A549 (cell line): ENCODE measurements at regions of chr1 and their contacts with region 1.

Region 1: DNA sequence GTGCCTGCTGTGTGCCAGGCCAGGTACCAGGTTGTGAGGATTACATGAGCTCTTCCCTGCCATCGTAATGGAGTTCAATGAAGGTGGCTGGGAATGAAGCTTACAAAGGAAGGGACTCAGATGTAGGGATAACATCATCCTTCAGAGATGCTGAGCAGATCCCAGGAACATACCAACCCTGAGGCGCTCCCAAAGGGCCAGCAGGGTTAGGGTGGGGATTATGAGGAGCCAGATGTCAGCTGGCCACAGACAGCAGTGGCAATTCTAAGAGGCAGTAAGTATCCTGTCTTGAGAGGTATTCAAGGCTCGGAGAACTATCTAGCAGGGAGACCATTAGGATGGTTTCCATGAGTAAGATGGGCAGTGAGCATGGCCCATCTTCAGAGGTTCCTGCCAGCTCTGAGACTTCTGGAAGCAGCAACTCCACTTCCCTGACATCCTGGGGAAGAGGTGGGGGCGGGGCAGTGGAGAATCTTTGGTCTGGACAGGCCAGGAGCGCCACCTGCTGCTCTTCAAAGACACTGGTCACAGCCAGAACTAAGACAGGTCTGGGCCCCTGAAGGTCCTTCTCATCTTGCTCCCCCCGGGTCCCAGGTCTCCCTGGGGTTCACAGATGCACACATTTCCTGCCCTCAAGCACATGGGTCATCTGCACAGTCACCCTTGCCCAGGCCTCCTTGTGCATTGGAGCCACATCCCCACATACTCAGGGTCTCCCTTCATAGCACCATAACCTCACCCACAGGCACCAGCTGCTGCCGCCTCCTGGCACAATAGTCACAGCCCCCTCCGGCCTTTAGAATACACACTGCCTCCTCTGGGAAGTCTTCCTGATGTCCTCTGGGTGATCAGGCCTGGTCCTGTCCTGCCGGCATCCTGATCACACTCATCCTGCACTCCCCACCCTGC is 2.7 kb upstream of the SDC3 start:
- DNase-seq: peak; percentile 74 to 81
- ATAC-seq: peak; percentile 75 to 87
- H3K4me3 ChIP-seq: no peak overlapping the region
- H3K27ac ChIP-seq: no peak overlapping the region
- H3K4me1 ChIP-seq: peaks cover 13% of the 10 kb centered on the region
- CTCF ChIP-seq: peak; percentile 76
- EP300 ChIP-seq: no peak
- POLR2A ChIP-seq: no peak
- RAD21 ChIP-seq: peak; percentile 94 to 97

Region 2: GRCh38 chr1:30718636-30719405 is 192.5 kb before region 1 on chr1:
- CTCF ChIA-PET with region 1: interaction called, 73 read pairs
- POLR2A ChIA-PET with region 1: interaction called, 4 read pairs
- DNase-seq: peak; percentile 66 to 94
- ATAC-seq: peak; percentile 80 to 81
- H3K4me3 ChIP-seq: peak overlapping the region; percentile 62
- H3K27ac ChIP-seq: peak overlapping the region; percentile 92 to 97
- H3K4me1 ChIP-seq: peaks cover 5% of the 10 kb centered on the region; the same call in 2 of the 3 replicates
- CTCF ChIP-seq: peak; percentile 83
- EP300 ChIP-seq: no peak
- POLR2A ChIP-seq: peak; percentile 82
- RAD21 ChIP-seq: peak in 1 of 2 experiments; percentile 89; a peak in 3 of 5 replicates

Region 3: GRCh38 chr1:30779294-30780071 is 131.8 kb before region 1 on chr1:
- CTCF ChIA-PET with region 1: interaction called, 743 read pairs
- POLR2A ChIA-PET with region 1: no interaction called
- DNase-seq: peak; percentile 61 to 67
- ATAC-seq: peak; percentile 75 to 87
- H3K4me3 ChIP-seq: no peak overlapping the region
- H3K27ac ChIP-seq: no peak overlapping the region
- H3K4me1 ChIP-seq: no peaks in the 10 kb centered on the region
- CTCF ChIP-seq: peak; percentile 63
- EP300 ChIP-seq: no peak
- POLR2A ChIP-seq: no peak
- RAD21 ChIP-seq: peak; percentile 67 to 72

Region 4: GRCh38 chr1:30823969-30824735 is 87.1 kb before region 1 on chr1:
- CTCF ChIA-PET with region 1: interaction called, 14 read pairs
- POLR2A ChIA-PET with region 1: no interaction called
- DNase-seq: peak; percentile 93 to 98
- ATAC-seq: peak; percentile 95 to 98
- H3K4me3 ChIP-seq: peak overlapping the region; percentile 40
- H3K27ac ChIP-seq: peak overlapping the region; percentile 78 to 87
- H3K4me1 ChIP-seq: peaks cover 17% of the 10 kb centered on the region
- CTCF ChIP-seq: no peak
- EP300 ChIP-seq: no peak
- POLR2A ChIP-seq: peak; percentile 57
- RAD21 ChIP-seq: 0 out of 5 replicates have a peak, but pooled peaks of 1 of the 2 experiments have one; percentile 17

Region 5: DNA sequence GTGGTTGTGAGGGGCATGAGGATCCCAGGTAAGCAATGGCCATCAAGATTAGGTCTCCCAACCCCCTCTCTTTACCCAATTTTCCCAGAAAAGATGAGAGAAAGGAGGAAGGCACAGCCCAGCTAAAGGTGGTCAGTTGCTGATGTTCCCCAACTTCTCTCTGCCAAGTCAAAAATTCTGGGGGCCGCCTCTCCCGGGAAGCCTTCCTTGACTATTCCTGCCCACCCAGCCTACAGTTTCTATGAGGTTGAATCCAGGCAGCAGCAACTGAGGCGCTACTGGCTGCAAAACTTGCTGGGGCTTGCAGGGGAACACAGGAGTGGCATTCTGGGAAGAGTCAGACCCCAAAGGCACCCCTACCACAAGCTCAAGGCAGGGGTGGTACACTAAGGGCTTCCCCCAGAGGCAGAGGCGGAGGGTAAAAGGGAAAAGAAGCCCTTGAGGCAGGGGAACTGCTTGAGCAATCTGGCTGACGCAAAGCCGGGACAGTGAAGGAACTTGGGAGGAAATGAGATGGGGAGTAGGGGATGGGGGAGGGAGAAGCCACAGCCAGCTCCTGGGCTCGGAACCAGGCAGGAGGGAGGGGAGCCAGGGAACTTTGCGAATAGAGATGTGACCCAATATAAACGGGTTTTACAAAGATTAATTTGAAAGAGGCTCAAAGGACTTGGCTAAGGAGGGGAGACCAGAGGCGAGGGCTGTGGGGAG is 33.9 kb before region 1 on chr1:
- CTCF ChIA-PET with region 1: interaction called, 11 read pairs
- POLR2A ChIA-PET with region 1: no interaction called
- DNase-seq: no peak
- ATAC-seq: no peak
- H3K4me3 ChIP-seq: no peak overlapping the region
- H3K27ac ChIP-seq: no peak overlapping the region
- H3K4me1 ChIP-seq: no peaks in the 10 kb centered on the region
- CTCF ChIP-seq: no peak
- EP300 ChIP-seq: no peak
- POLR2A ChIP-seq: no peak
- RAD21 ChIP-seq: no peak

Region 6: DNA sequence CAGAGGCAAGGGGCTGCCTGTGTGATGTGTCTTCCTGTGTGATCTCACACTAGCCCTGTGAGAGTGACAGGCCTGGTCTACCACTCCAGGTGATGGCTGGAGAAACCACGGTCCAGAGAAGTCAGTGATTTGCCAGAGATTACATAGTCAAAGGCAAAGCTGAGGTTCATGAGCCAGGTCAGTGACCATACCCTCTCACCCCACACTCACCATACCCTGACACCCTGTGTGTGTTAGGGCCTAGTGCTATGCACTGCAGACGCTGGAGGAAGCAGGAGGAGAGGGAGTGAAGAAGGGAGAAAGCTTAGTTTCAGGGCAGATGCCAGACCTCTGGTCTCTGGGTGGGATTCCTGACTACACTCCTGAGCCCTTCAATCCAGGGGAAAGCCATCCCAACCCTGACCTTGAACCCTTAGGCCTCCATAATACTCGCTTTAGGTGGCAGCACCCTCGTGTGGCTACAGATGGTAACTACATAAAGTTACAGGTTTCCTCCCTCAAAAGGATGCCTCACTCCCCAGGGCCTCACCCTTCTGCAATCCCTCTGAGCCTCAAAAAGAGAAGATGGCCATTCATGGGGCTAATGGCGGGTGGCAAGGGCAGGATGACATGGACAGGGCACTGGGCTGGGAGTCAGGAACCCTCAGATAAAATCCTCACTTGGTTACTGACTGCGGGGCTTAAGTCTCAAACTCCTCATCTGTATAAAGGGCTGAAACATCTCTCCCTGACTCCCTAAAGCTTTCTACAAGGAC is 18.0 kb after region 1 on chr1:
- CTCF ChIA-PET with region 1: interaction called, 45 read pairs
- POLR2A ChIA-PET with region 1: no interaction called
- DNase-seq: peak; percentile 37 to 40
- ATAC-seq: peak; percentile 78 to 79
- H3K4me3 ChIP-seq: no peak overlapping the region
- H3K27ac ChIP-seq: no peak overlapping the region
- H3K4me1 ChIP-seq: peaks cover 9% of the 10 kb centered on the region; the same call in 2 of the 3 replicates
- CTCF ChIP-seq: peak; percentile 55
- EP300 ChIP-seq: no peak
- POLR2A ChIP-seq: no peak
- RAD21 ChIP-seq: peak; percentile 51 to 67

Region 7: DNA sequence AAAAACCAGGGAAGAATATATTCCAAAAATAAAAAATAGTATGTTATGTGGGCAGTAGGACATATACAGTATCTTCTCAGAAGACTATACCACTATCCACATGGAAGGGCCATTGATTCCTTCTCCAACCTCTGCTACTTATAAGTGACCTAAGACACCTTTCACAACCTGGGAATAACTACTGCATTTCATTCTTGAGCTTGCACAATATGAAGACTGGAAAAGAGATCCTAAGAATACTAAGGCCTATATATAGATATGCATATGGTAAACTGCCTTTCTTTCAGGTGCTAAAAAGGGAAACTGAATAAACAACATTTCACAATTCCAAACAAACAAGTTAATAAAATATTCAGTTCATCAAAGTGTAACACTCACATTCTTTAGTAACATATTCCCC is 29.2 kb after region 1 on chr1:
- CTCF ChIA-PET with region 1: no interaction called
- POLR2A ChIA-PET with region 1: no interaction called
- DNase-seq: no peak
- ATAC-seq: no peak
- H3K4me3 ChIP-seq: no peak overlapping the region
- H3K27ac ChIP-seq: no peak overlapping the region
- H3K4me1 ChIP-seq: no peaks in the 10 kb centered on the region
- CTCF ChIP-seq: no peak
- EP300 ChIP-seq: no peak
- POLR2A ChIP-seq: no peak
- RAD21 ChIP-seq: no peak

Region 8: GRCh38 chr1:31010086-31010989 is 99.0 kb after region 1 on chr1:
- CTCF ChIA-PET with region 1: no interaction called
- POLR2A ChIA-PET with region 1: no interaction called
- DNase-seq: no peak
- ATAC-seq: peak in 1 of 2 experiments; percentile 54; a peak in 4 of 6 replicates
- H3K4me3 ChIP-seq: no peak overlapping the region
- H3K27ac ChIP-seq: no peak overlapping the region
- H3K4me1 ChIP-seq: peaks cover 61% of the 10 kb centered on the region
- CTCF ChIP-seq: no peak
- EP300 ChIP-seq: no peak
- POLR2A ChIP-seq: no peak
- RAD21 ChIP-seq: no peak